ENCODE measurements at regions of chr16 and their contacts with region 1.

Region 1: GRCh38 chr16:21300309-21301167 is 22.4 kb upstream of the CRYM start:
- DNase-seq: peak; percentile 70
- H3K4me3 Mint-ChIP-seq: peak overlapping the region; percentile 86
- H3K27ac Mint-ChIP-seq: peak overlapping the region; percentile 66
- H3K4me1 Mint-ChIP-seq: peaks cover 24% of the 10 kb centered on the region
- H3K27me3 Mint-ChIP-seq: peaks cover 50% of the 10 kb centered on the region

Region 2: DNA sequence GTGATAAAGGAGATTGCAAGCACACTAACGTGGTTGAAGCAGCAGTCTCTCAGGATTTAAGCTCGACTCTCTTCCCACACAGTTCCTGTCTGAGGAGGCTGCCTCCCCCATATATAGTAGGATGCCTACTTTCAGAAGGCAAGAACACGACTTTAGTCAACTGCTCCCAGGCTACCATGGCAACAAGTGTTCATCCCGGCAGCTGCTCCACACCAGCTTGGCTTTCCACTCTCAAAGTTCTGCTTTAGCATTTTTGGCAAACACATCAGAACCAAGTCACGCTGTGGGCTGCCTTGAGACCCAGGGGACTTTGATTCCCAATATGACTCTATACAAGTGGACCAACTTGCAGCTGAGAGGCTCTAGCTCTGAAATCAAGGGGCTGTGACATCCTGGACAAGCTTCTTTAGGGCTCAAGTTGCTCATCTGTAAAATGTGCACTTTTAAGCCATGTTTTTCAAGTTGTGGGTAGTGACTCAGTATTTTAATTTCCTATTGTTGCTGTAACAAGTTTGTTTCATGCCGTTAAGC is 105.7 kb before region 1 on chr16:
- CTCF ChIA-PET with region 1: no interaction called
- POLR2A ChIA-PET with region 1: interaction called, 12 read pairs
- DNase-seq: no peak
- H3K4me3 Mint-ChIP-seq: no peak overlapping the region
- H3K27ac Mint-ChIP-seq: no peak overlapping the region
- H3K4me1 Mint-ChIP-seq: no peaks in the 10 kb centered on the region
- H3K27me3 Mint-ChIP-seq: peaks cover 12% of the 10 kb centered on the region

Region 3: DNA sequence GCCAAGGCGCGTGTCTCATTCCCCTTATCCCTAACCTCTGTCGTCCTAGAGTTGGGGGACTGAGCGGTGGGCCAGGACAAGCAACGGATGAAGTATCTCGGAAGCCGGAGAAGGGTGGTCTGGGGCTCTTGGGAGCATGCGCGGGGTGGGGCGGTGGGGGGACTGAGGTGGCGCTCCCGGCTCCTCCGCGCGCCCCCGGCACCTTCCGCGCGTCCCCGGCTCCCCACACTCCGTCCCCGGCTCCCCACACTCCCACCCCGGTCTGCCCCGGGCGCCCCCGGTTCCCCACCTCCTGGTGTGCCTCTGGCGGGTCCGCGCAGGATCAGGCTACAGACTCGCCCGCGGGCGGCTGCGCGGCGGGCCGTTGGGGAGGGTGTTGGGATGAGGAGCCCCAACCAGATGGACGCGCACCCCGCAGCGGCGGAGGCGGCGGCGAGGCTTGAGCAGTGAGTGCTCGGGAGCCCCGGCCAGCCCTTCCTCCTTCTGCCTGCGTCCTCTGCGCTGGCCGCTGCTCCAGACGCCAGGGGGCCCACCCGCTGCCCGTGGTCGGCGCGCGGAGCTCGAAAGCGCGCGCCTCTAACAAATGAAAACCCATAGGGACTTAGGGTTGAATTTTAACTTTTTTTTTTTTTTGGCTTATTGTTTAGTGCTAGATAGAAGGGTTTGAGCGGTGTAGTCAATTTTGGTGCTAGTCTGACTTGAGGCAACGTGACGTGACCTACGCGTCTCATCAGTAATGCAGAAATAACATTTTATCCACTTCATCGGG is 16.8 kb before region 1 on chr16:
- CTCF ChIA-PET with region 1: no interaction called
- POLR2A ChIA-PET with region 1: no interaction called
- DNase-seq: no peak
- H3K4me3 Mint-ChIP-seq: peak overlapping the region; percentile 4
- H3K27ac Mint-ChIP-seq: no peak overlapping the region
- H3K4me1 Mint-ChIP-seq: peaks cover 5% of the 10 kb centered on the region
- H3K27me3 Mint-ChIP-seq: peaks cover 72% of the 10 kb centered on the region

Measured in activated CD4-positive, alpha-beta T cell treated with anti-CD3 and anti-CD28 coated beads, Interleukin-2, amount 10 ng/mL, durations not matched to agents 7 days and 5 days (primary cell).